Sciatic nerve (tissue), 2 donors: ENCODE measurements at regions of chr7 and their contacts with region 1.

Region 1: GRCh38 chr7:145812218-145812617 is 304.4 kb upstream of the CNTNAP2 start:
- DNase-seq: no peak
- ATAC-seq: no peak

Region 2: GRCh38 chr7:145845345-145845744 is 33.1 kb after region 1 on chr7:
- intact Hi-C with region 1: loop called (anchors 1 kb)
- DNase-seq: no peak
- ATAC-seq: no peak